ENCODE measurements at regions of chr2 and their contacts with region 1.

Region 1: DNA sequence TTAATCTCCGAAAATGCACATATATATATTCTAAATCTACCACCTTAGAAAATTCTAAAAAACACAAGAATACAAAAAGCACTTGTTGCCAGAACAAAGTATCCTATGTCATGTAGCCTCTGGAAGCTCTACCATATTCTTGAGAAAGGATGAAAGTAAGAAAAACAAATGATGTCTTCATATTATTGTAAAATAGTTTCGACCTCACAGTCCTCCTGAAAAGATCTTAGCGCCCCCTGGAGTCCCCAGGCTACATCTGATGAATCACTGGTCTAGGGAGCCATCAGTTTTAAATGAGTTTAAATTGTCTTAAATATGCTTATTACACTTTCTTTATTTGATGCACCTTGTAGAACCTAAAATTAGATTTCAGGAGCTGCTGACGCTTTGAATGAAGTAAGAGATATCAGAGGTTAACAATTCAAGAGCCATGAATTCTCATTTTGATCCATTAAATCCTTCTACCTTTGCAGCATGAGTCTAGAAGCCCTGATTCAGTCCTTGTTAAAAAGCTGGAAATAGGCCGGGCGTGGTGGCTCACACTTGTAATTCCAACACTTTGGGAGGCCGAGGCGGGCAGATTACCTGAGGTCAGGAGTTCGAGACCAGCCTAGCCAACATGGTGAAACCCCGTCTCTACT is 138.8 kb downstream of the MCFD2 start:
- DNase-seq: peak; percentile 80
- H3K4me3 Mint-ChIP-seq: no peak overlapping the region
- H3K27ac Mint-ChIP-seq: no peak overlapping the region
- H3K4me1 Mint-ChIP-seq: no peaks in the 10 kb centered on the region
- H3K27me3 Mint-ChIP-seq: peaks cover 2% of the 10 kb centered on the region

Region 2: DNA sequence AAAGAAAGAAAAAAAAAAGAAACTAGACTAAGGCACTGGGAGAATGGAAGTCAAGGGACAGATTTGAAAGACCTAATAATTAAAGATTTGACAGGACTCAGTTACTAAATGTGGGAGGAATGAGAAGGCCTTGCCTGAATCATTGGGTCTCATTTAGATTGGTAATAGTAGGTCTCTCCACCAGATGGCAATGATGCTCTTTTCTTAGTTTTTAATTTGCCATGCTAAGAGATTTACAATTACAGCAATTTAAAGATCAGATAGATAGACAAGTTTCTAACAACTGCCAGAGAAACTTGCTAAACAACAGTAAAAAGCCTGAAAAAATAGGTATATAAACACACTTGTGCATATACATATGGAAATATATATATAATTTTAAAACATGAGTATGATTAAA is 144.5 kb before region 1 on chr2:
- CTCF ChIA-PET with region 1: no interaction called
- intact Hi-C with region 1: loop called (anchors 1 kb)
- DNase-seq: no peak
- H3K4me3 Mint-ChIP-seq: no peak overlapping the region
- H3K27ac Mint-ChIP-seq: no peak overlapping the region
- H3K4me1 Mint-ChIP-seq: peaks cover 9% of the 10 kb centered on the region
- H3K27me3 Mint-ChIP-seq: no peaks in the 10 kb centered on the region

Region 3: GRCh38 chr2:46657042-46657504 is 119.7 kb before region 1 on chr2:
- CTCF ChIA-PET with region 1: interaction called, 6 read pairs
- intact Hi-C with region 1: loop called (anchors 1 kb)
- DNase-seq: no peak
- H3K4me3 Mint-ChIP-seq: no peak overlapping the region
- H3K27ac Mint-ChIP-seq: no peak overlapping the region
- H3K4me1 Mint-ChIP-seq: no peaks in the 10 kb centered on the region
- H3K27me3 Mint-ChIP-seq: peaks cover 7% of the 10 kb centered on the region

Region 4: GRCh38 chr2:46669996-46670793 is 106.6 kb before region 1 on chr2:
- CTCF ChIA-PET with region 1: no interaction called
- intact Hi-C with region 1: loop called (anchors 5 kb)
- DNase-seq: no peak
- H3K4me3 Mint-ChIP-seq: no peak overlapping the region
- H3K27ac Mint-ChIP-seq: no peak overlapping the region
- H3K4me1 Mint-ChIP-seq: no peaks in the 10 kb centered on the region
- H3K27me3 Mint-ChIP-seq: peaks cover 15% of the 10 kb centered on the region

Region 5: GRCh38 chr2:46793423-46794416 is 16.9 kb after region 1 on chr2:
- CTCF ChIA-PET with region 1: no interaction called
- intact Hi-C with region 1: no loop called
- DNase-seq: no peak
- H3K4me3 Mint-ChIP-seq: no peak overlapping the region
- H3K27ac Mint-ChIP-seq: no peak overlapping the region
- H3K4me1 Mint-ChIP-seq: no peaks in the 10 kb centered on the region
- H3K27me3 Mint-ChIP-seq: peaks cover 3% of the 10 kb centered on the region

Region 6: DNA sequence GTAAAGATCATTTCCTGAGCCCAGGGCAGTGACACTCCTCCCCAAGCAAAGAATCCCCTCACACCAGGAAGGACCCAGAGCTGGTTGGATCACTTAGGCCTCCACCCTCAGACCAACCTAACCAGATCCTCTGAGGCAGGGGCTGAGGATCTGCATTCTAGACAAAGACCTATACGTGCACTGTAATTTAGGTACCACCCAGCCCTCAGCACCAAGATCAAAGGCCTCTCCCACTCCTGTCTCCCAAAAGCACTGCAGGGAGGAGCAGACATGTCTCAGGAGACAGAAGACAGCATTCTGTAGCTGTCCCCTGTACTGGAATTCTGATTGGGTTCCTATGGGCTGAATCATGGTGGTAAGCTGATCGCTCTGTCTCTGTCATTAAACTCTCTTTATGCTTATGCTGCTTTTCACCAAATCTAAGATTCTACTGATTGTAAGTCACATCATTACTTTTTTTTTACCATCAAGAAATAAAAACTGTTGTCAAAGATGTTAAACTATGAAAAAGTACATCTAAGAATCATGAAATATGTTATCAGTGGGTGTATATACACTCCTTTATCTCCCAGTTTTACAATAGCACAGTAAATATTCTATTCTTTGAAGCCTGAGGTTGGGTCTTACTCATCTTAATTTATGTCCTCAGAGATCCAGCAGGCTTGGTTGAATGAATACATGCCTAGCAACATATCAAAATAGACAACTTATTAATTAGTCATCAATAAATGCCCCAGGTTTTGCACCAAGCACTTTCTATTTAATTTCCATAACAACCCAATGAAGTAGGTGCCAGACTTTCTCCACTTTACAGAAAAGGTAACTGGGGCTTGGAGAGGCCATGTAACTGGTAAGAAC is 110.5 kb after region 1 on chr2:
- CTCF ChIA-PET with region 1: interaction called, 4 read pairs
- intact Hi-C with region 1: loop called (anchors 1 kb)
- DNase-seq: no peak
- H3K4me3 Mint-ChIP-seq: no peak overlapping the region
- H3K27ac Mint-ChIP-seq: peak overlapping the region; percentile 86
- H3K4me1 Mint-ChIP-seq: peaks cover 21% of the 10 kb centered on the region
- H3K27me3 Mint-ChIP-seq: no peaks in the 10 kb centered on the region

Measured in activated naive CD4-positive, alpha-beta T cell treated with anti-CD3 and anti-CD28 coated beads for 36 hours (primary cell).